Ovary (tissue), 10 donors: ENCODE measurements at regions of chr5 and their contacts with region 1.

Region 1: GRCh38 chr5:142492781-142493281 is 168.0 kb upstream of the SPRY4 start:
- DNase-seq: peak in 2 of 5 donors; percentile 14 to 24
- H3K4me3 ChIP-seq: no peak overlapping the region
- H3K27ac ChIP-seq: peak overlapping the region in 1 of 2 donors; percentile 2
- H3K4me1 ChIP-seq: peaks cover 4% of the 10 kb centered on the region
- H3K27me3 ChIP-seq: no peaks in the 10 kb centered on the region
- CTCF ChIP-seq: no peak
- EP300 ChIP-seq: no peak
- POLR2A ChIP-seq: no peak

Region 2: DNA sequence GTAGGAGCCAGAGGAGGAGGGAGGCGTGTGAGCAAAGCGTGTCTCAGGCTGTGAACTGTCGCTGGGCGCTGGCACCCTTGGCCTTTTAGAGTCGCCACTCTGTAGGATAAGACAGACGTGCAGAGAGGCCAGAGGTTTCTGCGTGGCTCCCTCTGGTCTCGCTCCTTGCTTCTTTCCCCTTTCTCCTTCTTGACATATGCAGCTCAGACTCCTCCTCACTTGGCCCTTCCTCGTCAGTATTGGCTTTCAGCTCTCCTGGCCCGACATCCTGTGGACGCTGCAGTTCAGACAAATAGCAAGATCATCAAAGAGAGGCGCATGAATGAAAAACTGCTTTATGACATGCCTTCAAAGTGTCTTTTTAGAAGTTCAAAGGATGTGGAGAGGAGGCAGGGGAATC is 51.2 kb before region 1 on chr5:
- intact Hi-C with region 1: loop called in 1 of 4 experiments (anchors 5 kb)
- DNase-seq: peak in 1 of 5 donors; percentile 43
- H3K4me3 ChIP-seq: no peak overlapping the region
- H3K27ac ChIP-seq: no peak overlapping the region
- H3K4me1 ChIP-seq: peaks cover 1% of the 10 kb centered on the region
- H3K27me3 ChIP-seq: no peaks in the 10 kb centered on the region
- CTCF ChIP-seq: no peak
- EP300 ChIP-seq: no peak
- POLR2A ChIP-seq: no peak

Region 3: GRCh38 chr5:142548739-142549275 is 56.0 kb after region 1 on chr5:
- intact Hi-C with region 1: no loop called
- DNase-seq: peak in 4 of 5 donors; percentile 26 to 48 (median 35)
- H3K4me3 ChIP-seq: no peak overlapping the region
- H3K27ac ChIP-seq: no peak overlapping the region
- H3K4me1 ChIP-seq: no peaks in the 10 kb centered on the region
- H3K27me3 ChIP-seq: no peaks in the 10 kb centered on the region
- CTCF ChIP-seq: peak in 2 of 3 donors; percentile 35 to 46
- EP300 ChIP-seq: no peak
- POLR2A ChIP-seq: no peak